Stomach (tissue), 19 donors: ENCODE measurements at regions of chr20 and their contacts with region 1.

Region 1: GRCh38 chr20:50575847-50576720 is 65.9 kb downstream of the PTPN1 start:
- DNase-seq: peak; percentile 77 to 88
- H3K4me3 ChIP-seq: no peak overlapping the region
- H3K27ac ChIP-seq: peak overlapping the region in 4 of 5 donors; percentile 8 to 75 (median 48)
- H3K4me1 ChIP-seq: peaks cover 10 to 63% (median 34%) of the 10 kb centered on the region in 4 donors
- H3K27me3 ChIP-seq: no peaks in the 10 kb centered on the region
- CTCF ChIP-seq: peak in 5 of 7 experiments; percentile 60 to 77 (median 71)
- EP300 ChIP-seq: no peak
- POLR2A ChIP-seq: no peak

Region 2: DNA sequence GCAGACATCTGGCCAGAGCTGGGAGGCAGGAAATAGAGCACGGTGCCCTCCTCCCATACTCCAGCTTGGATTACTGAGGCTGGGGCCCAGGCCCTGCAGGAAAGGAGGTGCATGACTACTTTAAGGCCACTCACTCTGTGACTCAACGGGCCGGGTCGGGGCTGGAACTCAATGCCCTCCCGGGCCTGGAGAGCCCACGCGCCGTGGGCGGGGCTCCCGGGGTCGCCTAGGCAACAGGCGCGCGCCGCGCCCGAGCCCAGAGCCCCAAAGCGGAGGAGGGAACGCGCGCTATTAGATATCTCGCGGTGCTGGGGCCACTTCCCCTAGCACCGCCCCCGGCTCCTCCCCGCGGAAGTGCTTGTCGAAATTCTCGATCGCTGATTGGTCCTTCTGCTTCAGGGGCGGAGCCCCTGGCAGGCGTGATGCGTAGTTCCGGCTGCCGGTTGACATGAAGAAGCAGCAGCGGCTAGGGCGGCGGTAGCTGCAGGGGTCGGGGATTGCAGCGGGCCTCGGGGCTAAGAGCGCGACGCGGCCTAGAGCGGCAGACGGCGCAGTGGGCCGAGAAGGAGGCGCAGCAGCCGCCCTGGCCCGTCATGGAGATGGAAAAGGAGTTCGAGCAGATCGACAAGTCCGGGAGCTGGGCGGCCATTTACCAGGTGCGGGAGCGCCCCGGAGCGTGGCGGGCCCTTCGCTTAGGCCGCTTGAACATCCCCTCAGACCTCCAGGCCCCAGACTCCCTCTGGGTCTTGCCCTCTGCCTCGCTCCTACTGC is 66.0 kb before region 1 on chr20 and contains the start of gene PTPN1:
- intact Hi-C with region 1: loop called (anchors 10 kb)
- DNase-seq: peak; percentile 99
- H3K4me3 ChIP-seq: peak within 1 kb of the TSS; percentile 78 to 99 (median 93)
- H3K27ac ChIP-seq: peak within 1 kb of the TSS; percentile 87 to 98 (median 93)
- H3K4me1 ChIP-seq: peaks cover 37 to 51% (median 43%) of the 10 kb centered on the region in 4 donors
- H3K27me3 ChIP-seq: no peaks in the 10 kb centered on the region
- CTCF ChIP-seq: peak in 1 of 7 experiments; percentile 36
- EP300 ChIP-seq: no peak
- POLR2A ChIP-seq: peak in 2 of 4 donors; percentile 94
- total RNA-seq, gene PTPN1: 13.9 to 26.8 (median 21.7) TPM